GM12878 (cell line): ENCODE measurements at regions of chr17 and their contacts with region 1.

Region 1: GRCh38 chr17:69523244-69523861 is 108.9 kb downstream of the MAP2K6 start:
- DNase-seq: peak; percentile 55
- ATAC-seq: peak; percentile 91
- H3K4me3 ChIP-seq: no peak overlapping the region
- H3K27ac ChIP-seq: no peak overlapping the region
- H3K4me1 ChIP-seq: peaks cover 10% of the 10 kb centered on the region; the same call in 1 of the 2 replicates
- H3K27me3 ChIP-seq: no peaks in the 10 kb centered on the region
- CTCF ChIP-seq: peak; percentile 73 to 76 (median 74)
- EP300 ChIP-seq: no peak
- POLR2A ChIP-seq: no peak
- RAD21 ChIP-seq: peak; percentile 84

Region 2: GRCh38 chr17:69335058-69335457 is 188.3 kb before region 1 on chr17:
- CTCF ChIA-PET with region 1: interaction called, 71 read pairs
- POLR2A ChIA-PET with region 1: no interaction called
- RAD21 ChIA-PET with region 1: interaction called, 12 read pairs
- SMC1A ChIA-PET with region 1: interaction called, 11 read pairs
- in situ Hi-C with region 1: no loop called
- intact Hi-C with region 1: loop called (anchors 2 kb)
- DNase-seq: no peak
- ATAC-seq: peak; percentile 65
- H3K4me3 ChIP-seq: no peak overlapping the region
- H3K27ac ChIP-seq: no peak overlapping the region
- H3K4me1 ChIP-seq: no peaks in the 10 kb centered on the region
- H3K27me3 ChIP-seq: no peaks in the 10 kb centered on the region
- CTCF ChIP-seq: peak; percentile 7 to 43 (median 41); a peak in 2 of 6 replicates
- EP300 ChIP-seq: no peak
- POLR2A ChIP-seq: no peak
- RAD21 ChIP-seq: peak; percentile 64

Region 3: GRCh38 chr17:69388822-69389442 is 134.4 kb before region 1 on chr17:
- CTCF ChIA-PET with region 1: interaction called, 9 read pairs
- POLR2A ChIA-PET with region 1: no interaction called
- RAD21 ChIA-PET with region 1: interaction called, 3 read pairs
- SMC1A ChIA-PET with region 1: interaction called, 50 read pairs
- in situ Hi-C with region 1: no loop called
- intact Hi-C with region 1: loop called (anchors 5 kb)
- DNase-seq: no peak
- ATAC-seq: peak; percentile 49
- H3K4me3 ChIP-seq: no peak overlapping the region
- H3K27ac ChIP-seq: no peak overlapping the region
- H3K4me1 ChIP-seq: peaks cover 9% of the 10 kb centered on the region
- H3K27me3 ChIP-seq: no peaks in the 10 kb centered on the region
- CTCF ChIP-seq: no peak
- EP300 ChIP-seq: no peak
- POLR2A ChIP-seq: no peak
- RAD21 ChIP-seq: no peak

Region 4: GRCh38 chr17:69414408-69415274 is 108.7 kb before region 1 on chr17 and contains the start of gene MAP2K6:
- CTCF ChIA-PET with region 1: interaction called, 11 read pairs
- POLR2A ChIA-PET with region 1: interaction called, 3 read pairs
- RAD21 ChIA-PET with region 1: interaction called, 8 read pairs
- SMC1A ChIA-PET with region 1: interaction called, 9 read pairs
- in situ Hi-C with region 1: no loop called
- intact Hi-C with region 1: no loop called
- DNase-seq: peak; percentile 60
- ATAC-seq: peak; percentile 97
- H3K4me3 ChIP-seq: peak within 1 kb of the TSS; percentile 69
- H3K27ac ChIP-seq: peak within 1 kb of the TSS; percentile 45
- H3K4me1 ChIP-seq: no peaks in the 10 kb centered on the region
- H3K27me3 ChIP-seq: no peaks in the 10 kb centered on the region
- CTCF ChIP-seq: no peak
- EP300 ChIP-seq: peak in 1 of 2 experiments; percentile 62; a peak in 1 of 4 replicates
- POLR2A ChIP-seq: peak; percentile 62
- RAD21 ChIP-seq: no peak
- polyA plus RNA-seq, gene MAP2K6: 61.4 to 70.3 TPM

Region 5: GRCh38 chr17:69511250-69511649 is 12.1 kb before region 1 on chr17:
- CTCF ChIA-PET with region 1: interaction called, 100 read pairs
- POLR2A ChIA-PET with region 1: no interaction called
- RAD21 ChIA-PET with region 1: interaction called, 3 read pairs
- SMC1A ChIA-PET with region 1: interaction called, 56 read pairs
- in situ Hi-C with region 1: no loop called
- intact Hi-C with region 1: no loop called
- DNase-seq: no peak
- ATAC-seq: no peak
- H3K4me3 ChIP-seq: no peak overlapping the region
- H3K27ac ChIP-seq: no peak overlapping the region
- H3K4me1 ChIP-seq: peaks cover 2% of the 10 kb centered on the region
- H3K27me3 ChIP-seq: no peaks in the 10 kb centered on the region
- CTCF ChIP-seq: no peak
- EP300 ChIP-seq: no peak
- POLR2A ChIP-seq: no peak
- RAD21 ChIP-seq: no peak

Region 6: GRCh38 chr17:69547947-69548346 is 24.6 kb after region 1 on chr17:
- CTCF ChIA-PET with region 1: interaction called, 22 read pairs
- POLR2A ChIA-PET with region 1: no interaction called
- RAD21 ChIA-PET with region 1: interaction called, 4 read pairs
- SMC1A ChIA-PET with region 1: interaction called, 15 read pairs
- in situ Hi-C with region 1: no loop called
- intact Hi-C with region 1: no loop called
- DNase-seq: no peak
- ATAC-seq: peak; percentile 87
- H3K4me3 ChIP-seq: no peak overlapping the region
- H3K27ac ChIP-seq: peak overlapping the region; percentile 51
- H3K4me1 ChIP-seq: peaks cover 15% of the 10 kb centered on the region; the same call in 1 of the 2 replicates
- H3K27me3 ChIP-seq: no peaks in the 10 kb centered on the region
- CTCF ChIP-seq: no peak
- EP300 ChIP-seq: no peak
- POLR2A ChIP-seq: no peak
- RAD21 ChIP-seq: no peak

Region 7: GRCh38 chr17:69607162-69607834 is 83.9 kb after region 1 on chr17:
- CTCF ChIA-PET with region 1: interaction called, 16 read pairs
- POLR2A ChIA-PET with region 1: no interaction called
- RAD21 ChIA-PET with region 1: interaction called, 3 read pairs
- SMC1A ChIA-PET with region 1: interaction called, 7 read pairs
- in situ Hi-C with region 1: no loop called
- intact Hi-C with region 1: no loop called
- DNase-seq: peak; percentile 45
- ATAC-seq: peak; percentile 96
- H3K4me3 ChIP-seq: no peak overlapping the region
- H3K27ac ChIP-seq: peak overlapping the region; percentile 50; the same call in 1 of the 2 replicates
- H3K4me1 ChIP-seq: peaks cover 2% of the 10 kb centered on the region; the same call in 1 of the 2 replicates
- H3K27me3 ChIP-seq: no peaks in the 10 kb centered on the region
- CTCF ChIP-seq: peak; percentile 75 to 86 (median 85)
- EP300 ChIP-seq: no peak
- POLR2A ChIP-seq: no peak
- RAD21 ChIP-seq: peak; percentile 82

Region 8: GRCh38 chr17:69625474-69625873 is 102.1 kb after region 1 on chr17:
- CTCF ChIA-PET with region 1: no interaction called
- POLR2A ChIA-PET with region 1: no interaction called
- RAD21 ChIA-PET with region 1: no interaction called
- SMC1A ChIA-PET with region 1: no interaction called
- in situ Hi-C with region 1: no loop called
- intact Hi-C with region 1: no loop called
- DNase-seq: no peak
- ATAC-seq: no peak
- H3K4me3 ChIP-seq: no peak overlapping the region
- H3K27ac ChIP-seq: no peak overlapping the region
- H3K4me1 ChIP-seq: no peaks in the 10 kb centered on the region
- H3K27me3 ChIP-seq: no peaks in the 10 kb centered on the region
- CTCF ChIP-seq: no peak
- EP300 ChIP-seq: no peak
- POLR2A ChIP-seq: no peak
- RAD21 ChIP-seq: no peak

Region 9: DNA sequence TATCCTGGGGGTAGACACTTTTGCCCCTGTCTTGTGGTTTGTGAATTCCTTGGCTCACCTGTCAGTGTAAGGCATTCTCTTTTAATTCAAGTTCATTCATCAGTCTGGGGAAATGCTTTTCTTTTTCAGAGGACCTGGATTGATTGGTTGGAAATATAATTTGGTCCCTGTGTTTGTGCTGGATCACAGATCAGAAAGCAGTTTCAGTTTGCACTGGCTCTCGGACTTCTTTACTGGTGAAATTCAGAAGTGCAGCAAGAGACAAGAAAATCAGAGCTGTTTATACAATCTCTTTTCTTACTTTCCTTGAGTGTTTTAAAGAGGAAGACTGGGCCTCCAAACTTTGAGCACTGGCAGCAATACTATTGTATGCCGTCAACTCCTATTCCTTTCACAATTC is 389.9 kb after region 1 on chr17:
- CTCF ChIA-PET with region 1: no interaction called
- POLR2A ChIA-PET with region 1: no interaction called
- RAD21 ChIA-PET with region 1: no interaction called
- SMC1A ChIA-PET with region 1: no interaction called
- in situ Hi-C with region 1: no loop called
- intact Hi-C with region 1: no loop called
- DNase-seq: no peak
- ATAC-seq: no peak
- H3K4me3 ChIP-seq: no peak overlapping the region
- H3K27ac ChIP-seq: no peak overlapping the region
- H3K4me1 ChIP-seq: no peaks in the 10 kb centered on the region
- H3K27me3 ChIP-seq: no peaks in the 10 kb centered on the region
- CTCF ChIP-seq: no peak
- EP300 ChIP-seq: no peak
- POLR2A ChIP-seq: no peak
- RAD21 ChIP-seq: no peak